ENCODE measurements at regions of chr12 and their contacts with region 1.

Region 1: DNA sequence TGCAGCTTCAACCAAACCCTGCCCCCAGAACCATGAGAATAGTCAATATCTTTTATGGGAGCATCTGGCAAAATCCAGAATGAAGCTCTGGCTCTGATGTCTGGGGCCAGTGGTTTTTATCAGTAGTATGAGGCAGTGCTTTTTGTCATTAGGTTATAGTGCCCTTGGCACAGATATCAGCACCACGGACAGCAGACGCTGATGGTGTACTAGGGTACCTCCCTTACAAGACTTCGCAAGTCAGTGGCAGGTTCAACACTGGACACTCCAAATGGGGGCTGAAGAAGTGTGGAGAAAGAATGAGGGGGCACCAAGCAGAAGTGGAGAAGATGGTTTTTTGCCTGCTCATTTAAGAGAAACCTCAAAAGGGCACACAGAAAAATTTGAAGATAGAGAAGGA is 68.2 kb upstream of the E2F7 start:
- DNase-seq: no peak
- ATAC-seq: no peak
- H3K4me3 ChIP-seq: no peak overlapping the region
- H3K27ac ChIP-seq: no peak overlapping the region
- H3K4me1 ChIP-seq: no peaks in the 10 kb centered on the region
- H3K27me3 ChIP-seq: no peaks in the 10 kb centered on the region
- CTCF ChIP-seq: no peak

Region 2: DNA sequence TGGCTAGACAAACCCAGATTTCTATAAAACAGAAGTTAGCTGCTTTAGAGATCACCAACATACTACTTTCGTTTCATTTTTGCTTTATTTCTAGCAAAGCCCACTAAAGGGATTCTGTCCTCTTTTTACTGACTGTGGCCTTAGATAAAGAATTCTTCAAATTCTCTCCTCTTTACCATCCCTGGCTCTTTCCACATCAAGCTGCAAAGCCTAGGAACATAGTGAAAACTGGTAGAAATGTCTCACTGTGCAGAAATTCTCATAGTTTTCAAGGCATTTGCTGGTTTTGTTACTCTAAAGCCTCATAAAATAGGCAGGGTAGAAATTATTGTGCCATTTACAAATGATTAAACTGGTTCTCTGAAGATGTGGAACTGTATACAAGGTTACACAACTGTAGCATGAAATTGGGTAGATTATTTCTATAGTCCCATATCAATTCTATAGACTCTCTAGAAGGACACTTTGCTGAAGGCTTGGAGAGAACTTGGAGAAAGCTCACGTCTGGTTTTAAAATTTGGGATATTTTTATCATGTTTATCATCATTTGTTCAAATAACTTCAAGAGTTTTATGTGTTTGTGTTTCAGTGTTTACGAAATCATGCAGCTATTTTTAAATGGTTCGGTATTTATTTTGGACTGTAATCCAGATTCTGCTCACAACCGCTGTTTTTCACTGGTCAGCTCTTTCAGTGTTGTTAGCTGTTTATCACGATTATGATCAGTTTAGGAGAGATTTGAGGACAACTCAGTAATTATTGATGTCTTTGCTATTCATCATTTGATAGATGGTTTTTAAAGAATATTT is 218.0 kb before region 1 on chr12:
- intact Hi-C with region 1: no loop called
- DNase-seq: no peak
- ATAC-seq: no peak
- H3K4me3 ChIP-seq: no peak overlapping the region
- H3K27ac ChIP-seq: no peak overlapping the region
- H3K4me1 ChIP-seq: no peaks in the 10 kb centered on the region
- H3K27me3 ChIP-seq: no peaks in the 10 kb centered on the region
- CTCF ChIP-seq: no peak

Region 3: DNA sequence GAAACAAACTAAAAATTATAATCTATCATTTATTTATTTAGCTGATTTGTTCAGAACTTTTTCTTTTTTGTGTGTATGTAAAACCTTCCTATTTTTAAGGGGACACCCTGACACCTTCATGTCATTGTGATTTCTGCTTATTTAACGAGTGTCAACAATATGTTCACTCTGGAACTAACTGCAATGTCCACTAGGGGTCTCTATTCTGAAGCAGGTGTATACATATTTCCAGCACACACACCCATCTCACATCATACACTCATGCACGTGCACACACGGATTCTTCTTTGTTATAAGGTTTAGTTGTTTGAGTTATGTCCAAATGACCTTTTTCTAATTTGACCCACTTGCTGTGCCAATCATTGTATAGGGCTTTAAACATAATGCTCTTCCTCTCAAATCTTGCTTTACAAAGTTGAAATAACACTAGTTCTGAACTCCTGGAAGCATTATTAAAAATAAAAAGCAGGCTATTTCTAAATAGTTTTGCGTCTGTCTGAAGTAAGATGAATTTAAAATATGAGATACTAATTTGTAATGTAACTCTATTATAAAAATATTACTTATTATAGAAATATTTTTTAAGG is 83.7 kb before region 1 on chr12:
- intact Hi-C with region 1: no loop called
- DNase-seq: no peak
- ATAC-seq: peak in 2 of 4 donors; percentile 50 to 56
- H3K4me3 ChIP-seq: no peak overlapping the region
- H3K27ac ChIP-seq: no peak overlapping the region
- H3K4me1 ChIP-seq: no peaks in the 10 kb centered on the region
- H3K27me3 ChIP-seq: no peaks in the 10 kb centered on the region
- CTCF ChIP-seq: peak; percentile 68

Region 4: DNA sequence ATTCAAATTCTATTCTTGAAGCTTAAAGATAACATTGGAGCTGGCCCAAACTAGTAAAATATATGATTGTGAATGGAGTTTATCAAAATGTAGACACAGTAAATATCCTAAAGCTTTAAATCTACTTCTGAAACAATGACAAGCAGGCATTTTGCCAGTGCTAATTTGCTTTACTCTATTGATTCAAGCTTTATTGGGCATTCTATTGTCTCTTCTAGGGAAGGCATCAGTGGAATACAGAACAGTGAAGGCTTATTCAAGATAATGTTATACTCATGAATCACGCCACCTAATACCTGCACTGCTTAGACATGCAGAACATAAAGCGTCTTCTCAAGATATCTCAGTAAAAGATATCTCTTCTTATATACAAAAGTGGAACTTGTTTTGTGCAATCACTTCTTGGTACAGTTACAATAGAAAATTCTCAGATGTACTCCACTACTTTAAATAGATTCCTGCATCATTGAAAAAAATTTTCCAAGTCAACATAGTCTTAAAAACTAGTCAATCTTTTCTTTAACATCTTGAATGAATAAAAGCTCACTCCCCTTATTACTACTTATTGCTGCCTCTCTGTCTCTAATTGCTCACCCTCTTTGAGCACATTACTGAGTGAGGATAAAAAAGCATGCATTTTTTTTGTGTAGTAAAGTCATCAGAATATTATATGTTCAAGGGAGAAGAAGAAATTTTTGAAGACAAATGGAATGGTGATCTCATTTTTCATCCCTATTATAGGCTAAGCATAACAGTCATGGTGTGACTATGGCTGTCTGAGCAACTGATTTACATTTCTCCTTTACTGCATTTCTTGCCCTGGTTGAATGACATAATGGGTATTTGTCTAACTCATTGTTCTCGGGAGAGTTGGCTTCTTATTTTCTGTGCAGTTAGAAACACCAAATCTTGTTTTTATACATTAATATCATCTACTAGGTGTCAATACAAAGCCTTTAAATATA is 29.8 kb after region 1 on chr12:
- intact Hi-C with region 1: loop called in 1 of 2 experiments (anchors 1 kb)
- DNase-seq: no peak
- ATAC-seq: no peak
- H3K4me3 ChIP-seq: no peak overlapping the region
- H3K27ac ChIP-seq: no peak overlapping the region
- H3K4me1 ChIP-seq: no peaks in the 10 kb centered on the region
- H3K27me3 ChIP-seq: no peaks in the 10 kb centered on the region
- CTCF ChIP-seq: no peak